ENCODE measurements at regions of chr11 and their contacts with region 1.

Region 1: DNA sequence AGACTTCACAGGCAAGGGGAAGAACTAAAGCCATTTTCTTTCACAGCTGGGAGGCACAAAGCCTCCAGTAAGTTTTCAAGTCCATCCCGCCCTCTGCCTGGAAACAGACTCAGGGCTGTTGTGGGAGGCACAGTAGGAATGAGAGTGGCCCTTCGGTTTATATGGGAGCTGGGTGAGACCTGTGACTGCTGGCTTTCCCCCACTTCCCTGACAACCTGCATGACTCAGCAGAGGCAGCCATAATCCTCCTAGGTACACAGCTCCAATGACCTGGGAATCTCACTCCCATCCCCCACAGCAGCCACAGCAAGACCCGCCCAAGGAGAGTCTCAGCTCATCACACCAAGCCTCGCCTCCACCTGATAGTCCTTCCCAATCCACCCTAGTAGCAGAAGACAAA is 12.1 kb upstream of the TMEM45B start:
- DNase-seq: peak; percentile 69 to 92
- H3K4me3 ChIP-seq: no peak overlapping the region
- H3K4me3 Mint-ChIP-seq: peak overlapping the region; percentile 11
- H3K27ac Mint-ChIP-seq: peak overlapping the region; percentile 81
- H3K4me1 ChIP-seq: peaks cover 41% of the 10 kb centered on the region
- H3K4me1 Mint-ChIP-seq: peaks cover 37% of the 10 kb centered on the region
- H3K27me3 ChIP-seq: no peaks in the 10 kb centered on the region
- H3K27me3 Mint-ChIP-seq: no peaks in the 10 kb centered on the region
- CTCF ChIP-seq: no peak

Region 2: GRCh38 chr11:129791515-129791914 is 12.0 kb before region 1 on chr11:
- CTCF ChIA-PET with region 1: no interaction called
- POLR2A ChIA-PET with region 1: no interaction called
- intact Hi-C with region 1: loop called (anchors 1 kb)
- DNase-seq: peak in 1 of 2 experiments; percentile 50
- H3K4me3 ChIP-seq: no peak overlapping the region
- H3K4me3 Mint-ChIP-seq: no peak overlapping the region
- H3K27ac Mint-ChIP-seq: no peak overlapping the region
- H3K4me1 ChIP-seq: peaks cover 19% of the 10 kb centered on the region
- H3K4me1 Mint-ChIP-seq: peaks cover 21% of the 10 kb centered on the region
- H3K27me3 ChIP-seq: no peaks in the 10 kb centered on the region
- H3K27me3 Mint-ChIP-seq: no peaks in the 10 kb centered on the region
- CTCF ChIP-seq: no peak